HEK293 (cell line): ENCODE measurements at regions of chr1 and their contacts with region 1.

Region 1: GRCh38 chr1:151984313-151984956 is 9.2 kb downstream of the S100A10 start:
- H3K4me3 ChIP-seq: no peak overlapping the region
- H3K27ac ChIP-seq: no peak overlapping the region
- H3K4me1 ChIP-seq: peaks cover 32% of the 10 kb centered on the region
- CTCF ChIP-seq: no peak

Region 2: DNA sequence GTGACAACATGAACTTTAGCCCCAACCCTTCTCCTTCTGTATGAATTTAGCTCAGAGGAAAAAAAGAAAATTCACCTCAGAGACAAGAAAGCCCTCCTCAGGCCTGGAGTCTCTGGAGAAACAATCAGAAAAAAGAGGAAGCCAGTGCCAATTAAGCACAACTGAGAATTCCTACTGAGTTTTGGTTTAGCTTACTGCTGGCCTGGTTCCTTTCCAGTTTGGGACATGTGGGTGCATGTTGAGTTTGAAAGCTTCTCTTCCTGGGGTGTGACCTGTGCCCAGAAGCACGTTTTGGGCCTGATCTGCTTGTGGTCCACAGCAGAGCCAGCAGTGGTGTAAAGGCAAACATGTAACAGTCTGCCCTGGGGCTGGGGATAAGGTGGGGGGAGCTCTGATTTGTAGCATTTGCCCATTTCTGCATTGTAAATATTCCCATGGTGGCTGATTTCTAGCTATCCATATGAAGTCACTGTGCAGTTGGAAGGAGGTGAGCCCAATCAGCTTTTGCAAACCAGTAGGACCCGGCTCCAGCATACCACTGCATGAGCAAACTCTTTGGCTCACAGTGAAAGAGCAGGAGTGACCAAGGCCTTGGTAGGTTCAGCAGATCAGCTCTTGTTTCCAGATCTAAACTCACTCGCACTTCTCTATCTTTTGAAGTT is 126.3 kb before region 1 on chr1:
- CTCF ChIA-PET with region 1: no interaction called
- POLR2A ChIA-PET with region 1: no interaction called
- H3K4me3 ChIP-seq: no peak overlapping the region
- H3K27ac ChIP-seq: no peak overlapping the region
- H3K4me1 ChIP-seq: no peaks in the 10 kb centered on the region
- CTCF ChIP-seq: no peak

Region 3: GRCh38 chr1:151968058-151968457 is 16.4 kb before region 1 on chr1:
- CTCF ChIA-PET with region 1: interaction called, 131 read pairs
- POLR2A ChIA-PET with region 1: interaction called, 24 read pairs
- H3K4me3 ChIP-seq: no peak overlapping the region
- H3K27ac ChIP-seq: no peak overlapping the region; the same call in 1 of the 2 replicates
- H3K4me1 ChIP-seq: peaks cover 8% of the 10 kb centered on the region; the same call in 1 of the 2 replicates
- CTCF ChIP-seq: peak; percentile 91